B cell (primary cell): ENCODE measurements at regions of chr6 and their contacts with region 1.

Region 1: GRCh38 chr6:2931970-2932748 is 29.1 kb upstream of the SERPINB9 start:
- DNase-seq: peak; percentile 90
- ATAC-seq: peak; percentile 98
- H3K4me3 ChIP-seq: peak overlapping the region in 1 of 5 experiments; percentile 23
- H3K4me3 Mint-ChIP-seq: peak overlapping the region; percentile 69
- H3K27ac ChIP-seq: no peak overlapping the region
- H3K27ac Mint-ChIP-seq: peak overlapping the region; percentile 57
- H3K4me1 ChIP-seq: peaks cover 13 to 17% of the 10 kb centered on the region in 2 donors
- H3K4me1 Mint-ChIP-seq: peaks cover 20% of the 10 kb centered on the region
- H3K27me3 ChIP-seq: no peaks in the 10 kb centered on the region
- H3K27me3 Mint-ChIP-seq: no peaks in the 10 kb centered on the region
- CTCF ChIP-seq: peak; percentile 98

Region 2: GRCh38 chr6:2791124-2791974 is 140.8 kb before region 1 on chr6:
- CTCF ChIA-PET with region 1: interaction called, 118 read pairs
- POLR2A ChIA-PET with region 1: no interaction called
- intact Hi-C with region 1: loop called (anchors 1 kb)
- DNase-seq: peak; percentile 78
- ATAC-seq: peak; percentile 83
- H3K4me3 ChIP-seq: no peak overlapping the region
- H3K4me3 Mint-ChIP-seq: peak overlapping the region; percentile 67
- H3K27ac ChIP-seq: peak overlapping the region in 1 of 2 donors; percentile 18
- H3K27ac Mint-ChIP-seq: peak overlapping the region; percentile 82
- H3K4me1 ChIP-seq: peaks cover 30 to 35% of the 10 kb centered on the region in 2 donors
- H3K4me1 Mint-ChIP-seq: peaks cover 36% of the 10 kb centered on the region
- H3K27me3 ChIP-seq: no peaks in the 10 kb centered on the region
- H3K27me3 Mint-ChIP-seq: no peaks in the 10 kb centered on the region
- CTCF ChIP-seq: peak; percentile 82

Region 3: GRCh38 chr6:2848851-2849250 is 83.3 kb before region 1 on chr6:
- CTCF ChIA-PET with region 1: interaction called, 383 read pairs
- POLR2A ChIA-PET with region 1: interaction called, 7 read pairs
- intact Hi-C with region 1: loop called (anchors 1 kb)
- DNase-seq: peak; percentile 80
- ATAC-seq: peak; percentile 69
- H3K4me3 ChIP-seq: no peak overlapping the region
- H3K4me3 Mint-ChIP-seq: peak overlapping the region; percentile 52
- H3K27ac ChIP-seq: peak overlapping the region; percentile 30 to 73
- H3K27ac Mint-ChIP-seq: peak overlapping the region; percentile 84
- H3K4me1 ChIP-seq: peaks cover 27 to 33% of the 10 kb centered on the region in 2 donors
- H3K4me1 Mint-ChIP-seq: peaks cover 43% of the 10 kb centered on the region
- H3K27me3 ChIP-seq: no peaks in the 10 kb centered on the region
- H3K27me3 Mint-ChIP-seq: no peaks in the 10 kb centered on the region
- CTCF ChIP-seq: no peak

Region 4: GRCh38 chr6:2876210-2877056 is 55.7 kb before region 1 on chr6:
- CTCF ChIA-PET with region 1: interaction called, 20 read pairs
- POLR2A ChIA-PET with region 1: no interaction called
- intact Hi-C with region 1: no loop called
- DNase-seq: peak; percentile 58
- ATAC-seq: peak; percentile 15
- H3K4me3 ChIP-seq: peak overlapping the region; percentile 44 to 64 (median 58)
- H3K4me3 Mint-ChIP-seq: peak overlapping the region; percentile 91
- H3K27ac ChIP-seq: peak overlapping the region; percentile 91 to 94
- H3K27ac Mint-ChIP-seq: peak overlapping the region; percentile 97
- H3K4me1 ChIP-seq: peaks cover 73 to 75% of the 10 kb centered on the region in 2 donors
- H3K4me1 Mint-ChIP-seq: peaks cover 85% of the 10 kb centered on the region
- H3K27me3 ChIP-seq: no peaks in the 10 kb centered on the region
- H3K27me3 Mint-ChIP-seq: no peaks in the 10 kb centered on the region
- CTCF ChIP-seq: no peak

Region 5: GRCh38 chr6:2900821-2901644 is 31.1 kb before region 1 on chr6:
- CTCF ChIA-PET with region 1: interaction called, 6 read pairs
- POLR2A ChIA-PET with region 1: no interaction called
- intact Hi-C with region 1: loop called (anchors 2 kb)
- DNase-seq: no peak
- ATAC-seq: no peak
- H3K4me3 ChIP-seq: peak overlapping the region in 4 of 5 experiments; percentile 10 to 95 (median 90)
- H3K4me3 Mint-ChIP-seq: peak overlapping the region; percentile 100
- H3K27ac ChIP-seq: peak overlapping the region; percentile 31 to 91
- H3K27ac Mint-ChIP-seq: peak overlapping the region; percentile 97
- H3K4me1 ChIP-seq: peaks cover 45 to 48% of the 10 kb centered on the region in 2 donors
- H3K4me1 Mint-ChIP-seq: peaks cover 56% of the 10 kb centered on the region
- H3K27me3 ChIP-seq: no peaks in the 10 kb centered on the region
- H3K27me3 Mint-ChIP-seq: no peaks in the 10 kb centered on the region
- CTCF ChIP-seq: no peak

Region 6: DNA sequence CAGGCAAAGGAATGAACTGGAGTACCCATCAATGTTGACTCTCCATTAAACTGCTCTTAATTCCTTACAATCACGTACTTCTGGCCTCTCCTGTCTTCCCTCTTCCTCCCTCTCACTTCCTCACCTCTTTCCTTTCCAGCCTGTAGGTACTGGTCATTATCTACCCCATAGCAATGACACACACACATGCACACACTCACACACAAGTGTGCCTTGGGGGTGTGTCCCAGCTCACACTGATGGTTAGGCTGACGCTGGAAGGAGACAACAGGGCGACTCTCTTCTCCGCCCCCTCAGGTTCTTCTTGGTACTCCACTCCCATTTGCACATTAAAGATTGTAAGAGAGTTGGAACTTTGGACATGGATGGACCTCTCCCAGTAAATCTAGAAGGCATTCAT is 15.1 kb before region 1 on chr6:
- CTCF ChIA-PET with region 1: interaction called, 49 read pairs
- POLR2A ChIA-PET with region 1: no interaction called
- intact Hi-C with region 1: no loop called
- DNase-seq: no peak
- ATAC-seq: peak; percentile 56
- H3K4me3 ChIP-seq: no peak overlapping the region
- H3K4me3 Mint-ChIP-seq: no peak overlapping the region
- H3K27ac ChIP-seq: no peak overlapping the region
- H3K27ac Mint-ChIP-seq: no peak overlapping the region
- H3K4me1 ChIP-seq: no peaks in the 10 kb centered on the region
- H3K4me1 Mint-ChIP-seq: peaks cover 2% of the 10 kb centered on the region
- H3K27me3 ChIP-seq: no peaks in the 10 kb centered on the region
- H3K27me3 Mint-ChIP-seq: no peaks in the 10 kb centered on the region
- CTCF ChIP-seq: peak; percentile 45

Region 7: GRCh38 chr6:2952557-2953095 is 20.5 kb after region 1 on chr6:
- CTCF ChIA-PET with region 1: interaction called, 24 read pairs
- POLR2A ChIA-PET with region 1: no interaction called
- intact Hi-C with region 1: no loop called
- DNase-seq: peak; percentile 69
- ATAC-seq: peak; percentile 97
- H3K4me3 ChIP-seq: peak overlapping the region in 1 of 5 experiments; percentile 15
- H3K4me3 Mint-ChIP-seq: peak overlapping the region; percentile 71
- H3K27ac ChIP-seq: no peak overlapping the region
- H3K27ac Mint-ChIP-seq: no peak overlapping the region
- H3K4me1 ChIP-seq: peaks cover 0 to 17% of the 10 kb centered on the region in 2 donors
- H3K4me1 Mint-ChIP-seq: peaks cover 12% of the 10 kb centered on the region
- H3K27me3 ChIP-seq: no peaks in the 10 kb centered on the region
- H3K27me3 Mint-ChIP-seq: no peaks in the 10 kb centered on the region
- CTCF ChIP-seq: peak; percentile 90